Aorta (tissue), 5 donors: ENCODE measurements at regions of chr19 and their contacts with region 1.

Region 1: GRCh38 chr19:47514869-47515588 is at the start of gene NAPA:
- DNase-seq: peak; percentile 100
- ATAC-seq: peak; percentile 100
- H3K4me3 ChIP-seq: peak within 1 kb of the TSS; percentile 47 to 62
- H3K27ac ChIP-seq: peak within 1 kb of the TSS; percentile 39 to 79
- H3K4me1 ChIP-seq: no peaks in the 10 kb centered on the region
- H3K27me3 ChIP-seq: no peaks in the 10 kb centered on the region
- total RNA-seq, gene NAPA: 63.5 to 79.8 TPM

Region 2: DNA sequence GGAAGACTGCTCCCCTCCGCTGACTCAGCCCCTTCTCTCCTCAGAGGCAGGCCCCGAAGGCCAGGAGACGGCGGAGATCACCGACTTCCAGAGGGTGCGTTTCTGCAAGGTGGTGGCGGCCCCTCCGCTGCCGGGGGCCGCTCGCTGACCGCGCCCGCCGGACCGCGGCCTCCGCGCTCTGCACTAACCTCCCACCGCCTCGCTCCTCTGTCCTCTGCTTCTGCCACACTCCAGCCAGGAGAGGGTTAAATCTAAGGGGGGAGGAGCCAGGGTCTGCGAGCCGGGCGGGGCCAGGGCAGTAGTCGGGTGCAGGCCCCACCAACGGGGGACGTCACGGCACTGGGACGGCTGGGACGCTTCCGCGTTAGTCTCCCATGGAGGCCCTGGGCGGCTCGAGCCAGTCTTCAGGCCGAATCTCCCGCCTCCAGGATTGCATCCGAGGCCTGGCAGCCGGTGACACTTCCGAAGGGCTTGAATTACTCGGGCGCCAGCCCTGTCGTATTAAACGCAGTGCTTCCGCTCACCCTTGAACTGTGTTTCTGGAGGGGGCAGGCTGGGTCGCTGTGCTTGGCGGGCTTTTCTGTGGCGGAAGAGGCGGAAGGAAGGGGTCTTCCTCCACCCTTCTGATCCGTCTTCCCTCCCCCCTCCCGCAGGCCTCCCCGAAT is 241.6 kb before region 1 on chr19:
- intact Hi-C with region 1: loop called in 1 of 2 experiments (anchors 10 kb)
- DNase-seq: peak; percentile 97 to 98
- ATAC-seq: peak; percentile 91
- H3K4me3 ChIP-seq: peak overlapping the region; percentile 46 to 72
- H3K27ac ChIP-seq: peak overlapping the region; percentile 87 to 90
- H3K4me1 ChIP-seq: no peaks in the 10 kb centered on the region
- H3K27me3 ChIP-seq: no peaks in the 10 kb centered on the region

Region 3: GRCh38 chr19:47363758-47364531 is 151.1 kb before region 1 on chr19:
- intact Hi-C with region 1: no loop called
- DNase-seq: no peak
- ATAC-seq: no peak
- H3K4me3 ChIP-seq: no peak overlapping the region
- H3K27ac ChIP-seq: no peak overlapping the region
- H3K4me1 ChIP-seq: no peaks in the 10 kb centered on the region
- H3K27me3 ChIP-seq: no peaks in the 10 kb centered on the region

Region 4: DNA sequence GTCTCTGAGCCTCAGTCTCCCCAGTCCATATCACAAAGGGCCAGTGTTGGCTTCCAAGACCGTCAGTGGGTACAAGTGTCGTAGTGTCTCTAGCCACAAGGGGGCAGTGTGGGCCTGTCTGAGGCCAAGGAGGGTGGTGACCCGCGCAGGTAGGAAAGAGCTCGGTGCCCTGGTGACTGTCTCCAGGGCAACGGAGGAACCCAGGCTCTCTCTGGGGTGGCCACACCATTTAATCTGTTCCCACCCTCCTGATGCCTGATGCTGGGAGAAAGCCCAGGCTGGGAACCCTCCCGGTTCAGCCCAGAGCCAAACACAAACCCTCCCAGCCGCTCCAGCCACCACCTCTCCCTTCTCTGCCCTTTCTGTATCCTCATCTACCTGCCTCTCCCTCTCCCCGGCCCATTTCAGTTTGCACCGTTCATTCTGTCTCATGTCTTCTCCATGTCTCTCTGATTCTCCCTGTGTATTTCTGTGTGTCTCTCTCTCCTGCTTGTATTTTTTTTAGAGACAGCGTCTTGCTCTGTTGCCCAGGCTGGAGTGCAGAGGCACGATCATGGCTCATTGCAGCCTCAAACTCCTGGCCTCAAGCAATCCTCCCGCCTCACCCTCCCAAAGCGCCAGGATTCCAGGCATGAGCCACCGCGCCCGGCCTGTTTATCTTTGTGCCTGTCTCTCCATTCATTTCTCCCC is 78.2 kb before region 1 on chr19:
- intact Hi-C with region 1: loop called (anchors 1 kb)
- DNase-seq: peak; percentile 81 to 91
- ATAC-seq: peak; percentile 88
- H3K4me3 ChIP-seq: no peak overlapping the region
- H3K27ac ChIP-seq: no peak overlapping the region
- H3K4me1 ChIP-seq: no peaks in the 10 kb centered on the region
- H3K27me3 ChIP-seq: no peaks in the 10 kb centered on the region

Region 5: GRCh38 chr19:47483800-47484690 is 31.0 kb before region 1 on chr19 and contains the start of gene KPTN:
- intact Hi-C with region 1: loop called in 1 of 2 experiments (anchors 1 kb)
- DNase-seq: peak; percentile 94 to 97
- ATAC-seq: peak; percentile 94
- H3K4me3 ChIP-seq: peak within 1 kb of the TSS; percentile 54 to 73
- H3K27ac ChIP-seq: peak within 1 kb of the TSS in 1 of 2 donors; percentile 18
- H3K4me1 ChIP-seq: no peaks in the 10 kb centered on the region
- H3K27me3 ChIP-seq: no peaks in the 10 kb centered on the region
- total RNA-seq, gene KPTN: 3.0 to 4.3 TPM

Region 6: GRCh38 chr19:47600246-47601179 is 85.5 kb after region 1 on chr19:
- intact Hi-C with region 1: loop called (anchors 1 to 10 kb)
- DNase-seq: peak; percentile 100
- ATAC-seq: peak; percentile 99
- H3K4me3 ChIP-seq: peak overlapping the region; percentile 43 to 52
- H3K27ac ChIP-seq: peak overlapping the region in 1 of 2 donors; percentile 46
- H3K4me1 ChIP-seq: peaks cover 0 to 2% of the 10 kb centered on the region in 2 donors
- H3K27me3 ChIP-seq: no peaks in the 10 kb centered on the region

Region 7: DNA sequence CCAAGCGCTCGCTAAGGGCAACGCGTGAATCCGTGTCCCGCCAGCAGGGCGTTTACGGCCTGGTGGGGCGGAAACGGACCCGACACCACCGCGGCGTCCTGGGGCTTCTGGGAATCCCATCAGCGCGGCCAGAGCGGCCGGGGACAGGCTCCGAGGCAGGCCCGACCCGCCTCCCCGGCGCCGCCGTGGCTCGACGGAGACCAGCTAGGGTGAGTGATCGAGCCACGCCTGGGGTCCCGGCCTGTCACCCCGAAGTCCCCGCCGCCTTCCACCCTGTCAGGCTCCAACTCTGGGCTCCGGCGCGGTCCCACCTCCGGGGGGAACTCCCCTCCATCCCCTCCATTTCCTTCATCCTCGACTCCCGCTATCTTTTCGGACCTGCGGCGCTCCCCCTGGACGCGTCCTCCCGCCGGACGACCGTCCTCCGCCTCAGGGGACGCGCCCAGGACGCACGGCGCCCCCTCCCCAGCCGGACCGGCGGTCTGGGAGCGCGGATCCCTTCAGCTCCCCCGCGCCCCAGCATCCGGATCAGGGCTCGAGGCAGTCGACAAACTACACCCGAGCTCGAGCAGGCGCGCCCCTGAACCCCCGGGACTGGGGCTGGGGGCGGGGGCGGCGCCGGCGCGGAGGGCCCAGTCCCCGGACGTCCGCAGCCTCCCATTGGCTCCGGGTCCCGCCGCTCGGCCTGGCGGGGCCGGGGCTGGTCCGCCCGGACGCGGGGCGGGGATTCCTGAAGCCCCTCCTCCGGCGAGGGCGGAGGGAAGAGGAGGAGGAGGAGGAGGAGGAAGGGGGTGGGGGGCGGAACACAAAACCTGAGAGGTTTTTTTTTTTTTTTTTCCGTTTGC is 93.3 kb after region 1 on chr19:
- intact Hi-C with region 1: loop called (anchors 5 to 10 kb)
- DNase-seq: peak; percentile 96 to 98
- ATAC-seq: peak; percentile 96
- H3K4me3 ChIP-seq: peak overlapping the region; percentile 96 to 98
- H3K27ac ChIP-seq: peak overlapping the region; percentile 36 to 98
- H3K4me1 ChIP-seq: no peaks in the 10 kb centered on the region
- H3K27me3 ChIP-seq: no peaks in the 10 kb centered on the region

Region 8: DNA sequence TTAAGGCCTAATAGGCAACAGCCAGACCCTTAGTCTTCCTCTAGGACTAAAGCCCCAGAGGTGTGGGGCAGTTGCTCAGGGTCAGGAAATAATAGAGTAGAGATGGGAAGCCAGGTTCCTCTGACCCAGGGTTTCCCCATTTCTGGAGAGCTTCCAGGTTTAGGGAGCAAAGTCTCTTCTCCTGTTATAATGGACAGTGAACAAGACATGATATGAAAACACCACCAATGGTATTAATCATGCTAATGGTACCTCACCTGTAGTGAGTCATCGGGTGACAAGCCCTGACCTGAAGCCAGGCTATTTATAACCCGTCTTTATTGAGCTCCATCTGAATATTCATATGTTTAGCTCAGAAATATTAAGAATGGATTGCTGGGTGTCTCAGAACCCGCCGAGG is 118.5 kb after region 1 on chr19:
- intact Hi-C with region 1: no loop called
- DNase-seq: no peak
- ATAC-seq: no peak
- H3K4me3 ChIP-seq: no peak overlapping the region
- H3K27ac ChIP-seq: no peak overlapping the region
- H3K4me1 ChIP-seq: no peaks in the 10 kb centered on the region
- H3K27me3 ChIP-seq: no peaks in the 10 kb centered on the region

Region 9: GRCh38 chr19:47697863-47698609 is 183.0 kb after region 1 on chr19:
- intact Hi-C with region 1: loop called in 1 of 2 experiments (anchors 5 kb)
- DNase-seq: peak; percentile 80 to 88
- ATAC-seq: peak; percentile 88
- H3K4me3 ChIP-seq: no peak overlapping the region
- H3K27ac ChIP-seq: no peak overlapping the region
- H3K4me1 ChIP-seq: no peaks in the 10 kb centered on the region
- H3K27me3 ChIP-seq: no peaks in the 10 kb centered on the region